ENCODE measurements at regions of chr10 and their contacts with region 1.

Region 1: DNA sequence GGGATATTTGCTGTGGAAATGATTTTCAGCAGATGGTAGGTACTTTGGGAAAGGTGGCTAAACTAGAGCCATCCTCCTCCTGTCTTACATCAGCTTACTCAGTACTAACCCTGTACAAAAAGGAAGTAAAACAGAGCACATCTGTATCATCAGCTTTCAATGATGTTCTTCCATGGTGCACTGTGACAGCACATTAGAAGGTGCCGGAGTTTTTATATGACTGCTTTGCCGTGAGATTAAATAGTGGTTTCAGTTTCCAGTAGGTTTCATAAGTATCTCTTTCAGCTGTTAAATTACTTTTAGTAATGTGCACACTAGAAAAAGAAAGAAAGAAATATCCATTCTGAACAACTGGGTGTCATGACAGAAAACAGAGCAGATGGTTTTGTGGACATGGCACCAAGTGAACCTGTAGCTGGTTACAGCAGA is 86.5 kb downstream of the ARID5B start:
- DNase-seq: no peak
- H3K4me3 ChIP-seq: no peak overlapping the region
- H3K27ac ChIP-seq: peak overlapping the region; percentile 11 to 57
- H3K4me1 ChIP-seq: peaks cover 6% of the 10 kb centered on the region
- H3K27me3 ChIP-seq: no peaks in the 10 kb centered on the region
- CTCF ChIP-seq: no peak
- POLR2A ChIP-seq: no peak

Region 2: DNA sequence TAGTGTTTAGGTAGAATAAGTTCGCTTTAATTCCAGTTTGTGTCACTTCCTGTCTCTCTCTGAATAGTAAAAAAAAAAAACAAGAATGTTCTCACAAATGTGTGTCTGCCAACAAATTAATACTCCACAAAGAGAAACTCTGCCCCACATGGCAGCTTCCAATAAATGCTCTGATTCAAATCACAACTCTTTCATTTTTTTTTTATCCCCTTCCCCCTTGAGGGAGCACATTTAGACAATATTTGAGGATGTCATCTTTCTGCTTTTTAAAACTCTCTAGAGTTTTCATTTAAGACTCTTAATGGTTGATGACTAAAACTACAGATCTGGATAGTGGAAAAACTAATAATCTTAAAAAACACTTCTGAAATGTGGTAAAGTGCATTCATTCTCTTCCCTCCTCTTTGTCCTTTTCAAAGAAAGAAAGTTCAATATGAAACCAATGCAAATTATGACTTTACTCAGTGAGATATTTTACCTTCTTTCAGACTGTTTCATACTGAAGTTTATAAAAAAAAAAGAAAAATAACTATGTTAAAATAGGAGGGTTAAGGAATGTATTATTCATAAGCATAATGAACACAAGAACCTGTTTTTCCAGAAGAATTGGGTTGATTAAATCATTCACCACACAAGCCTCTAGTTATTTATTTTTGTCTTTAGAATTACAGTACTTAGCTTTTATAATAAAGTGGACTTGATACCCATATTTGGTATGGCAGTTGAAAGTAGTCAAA is 44.1 kb before region 1 on chr10:
- intact Hi-C with region 1: loop called (anchors 5 kb)
- DNase-seq: no peak
- H3K4me3 ChIP-seq: no peak overlapping the region
- H3K27ac ChIP-seq: peak overlapping the region; percentile 77 to 80
- H3K4me1 ChIP-seq: no peaks in the 10 kb centered on the region
- H3K27me3 ChIP-seq: no peaks in the 10 kb centered on the region
- CTCF ChIP-seq: no peak
- POLR2A ChIP-seq: no peak

Measured in prostate gland (tissue), 2 donors.